ENCODE measurements at regions of chr1 and their contacts with region 1.

Region 1: GRCh38 chr1:58162952-58163550 is 383.5 kb downstream of the OMA1 start:
- DNase-seq: peak; percentile 41
- H3K4me3 ChIP-seq: no peak overlapping the region; a peak in 1 of 4 replicates
- H3K27ac ChIP-seq: no peak overlapping the region
- H3K4me1 ChIP-seq: no peaks in the 10 kb centered on the region; a peak in 1 of 4 replicates
- H3K27me3 ChIP-seq: no peaks in the 10 kb centered on the region
- CTCF ChIP-seq: peak; percentile 89
- EP300 ChIP-seq: no peak
- RAD21 ChIP-seq: peak; percentile 84

Region 2: GRCh38 chr1:58094221-58094620 is 68.8 kb before region 1 on chr1:
- CTCF ChIA-PET with region 1: no interaction called
- POLR2A ChIA-PET with region 1: no interaction called
- DNase-seq: no peak
- H3K4me3 ChIP-seq: no peak overlapping the region
- H3K27ac ChIP-seq: no peak overlapping the region
- H3K4me1 ChIP-seq: no peaks in the 10 kb centered on the region
- H3K27me3 ChIP-seq: no peaks in the 10 kb centered on the region
- CTCF ChIP-seq: no peak
- EP300 ChIP-seq: no peak
- RAD21 ChIP-seq: no peak

Region 3: GRCh38 chr1:58149271-58149812 is 13.7 kb before region 1 on chr1:
- CTCF ChIA-PET with region 1: interaction called, 15 read pairs
- POLR2A ChIA-PET with region 1: no interaction called
- DNase-seq: no peak
- H3K4me3 ChIP-seq: no peak overlapping the region
- H3K27ac ChIP-seq: no peak overlapping the region
- H3K4me1 ChIP-seq: peaks cover 0 to 6% of the 10 kb centered on the region in 2 experiments; a peak in 2 of 4 replicates
- H3K27me3 ChIP-seq: no peaks in the 10 kb centered on the region
- CTCF ChIP-seq: no peak
- EP300 ChIP-seq: no peak
- RAD21 ChIP-seq: no peak

Region 4: GRCh38 chr1:58180537-58180936 is 17.5 kb after region 1 on chr1:
- CTCF ChIA-PET with region 1: interaction called, 11 read pairs
- POLR2A ChIA-PET with region 1: no interaction called
- DNase-seq: no peak
- H3K4me3 ChIP-seq: no peak overlapping the region
- H3K27ac ChIP-seq: no peak overlapping the region
- H3K4me1 ChIP-seq: no peaks in the 10 kb centered on the region
- H3K27me3 ChIP-seq: no peaks in the 10 kb centered on the region
- CTCF ChIP-seq: no peak
- EP300 ChIP-seq: no peak
- RAD21 ChIP-seq: no peak

Region 5: DNA sequence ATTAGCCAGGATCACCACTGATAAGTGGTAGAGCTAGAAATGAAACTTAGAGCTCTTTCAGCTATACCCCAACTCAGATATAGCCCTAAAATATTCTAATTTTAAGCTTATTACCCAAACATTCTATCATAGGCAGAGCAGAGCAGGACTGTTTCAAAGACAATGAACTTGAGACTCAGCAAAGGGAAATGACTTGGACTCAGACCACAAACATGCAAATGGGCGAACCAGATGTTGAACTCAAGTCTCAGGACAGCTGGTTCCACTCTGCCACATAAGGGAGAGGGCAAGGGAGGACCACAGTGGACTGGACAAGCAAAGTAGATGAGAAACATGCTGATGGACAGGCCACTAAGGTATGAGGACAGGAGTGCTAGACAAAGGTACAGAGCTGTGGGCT is 68.2 kb after region 1 on chr1:
- CTCF ChIA-PET with region 1: no interaction called
- POLR2A ChIA-PET with region 1: no interaction called
- DNase-seq: no peak
- H3K4me3 ChIP-seq: no peak overlapping the region
- H3K27ac ChIP-seq: no peak overlapping the region
- H3K4me1 ChIP-seq: no peaks in the 10 kb centered on the region
- H3K27me3 ChIP-seq: no peaks in the 10 kb centered on the region
- CTCF ChIP-seq: no peak
- EP300 ChIP-seq: no peak
- RAD21 ChIP-seq: no peak

Measured in SK-N-SH (cell line).